ENCODE measurements at regions of chr3 and their contacts with region 1.

Region 1: GRCh38 chr3:4712143-4712542 is 219.0 kb downstream of the ITPR1 start:
- DNase-seq: no peak
- ATAC-seq: no peak
- H3K4me3 Mint-ChIP-seq: no peak overlapping the region
- H3K27ac Mint-ChIP-seq: no peak overlapping the region
- H3K4me1 Mint-ChIP-seq: peaks cover 31% of the 10 kb centered on the region
- H3K27me3 Mint-ChIP-seq: no peaks in the 10 kb centered on the region

Region 2: DNA sequence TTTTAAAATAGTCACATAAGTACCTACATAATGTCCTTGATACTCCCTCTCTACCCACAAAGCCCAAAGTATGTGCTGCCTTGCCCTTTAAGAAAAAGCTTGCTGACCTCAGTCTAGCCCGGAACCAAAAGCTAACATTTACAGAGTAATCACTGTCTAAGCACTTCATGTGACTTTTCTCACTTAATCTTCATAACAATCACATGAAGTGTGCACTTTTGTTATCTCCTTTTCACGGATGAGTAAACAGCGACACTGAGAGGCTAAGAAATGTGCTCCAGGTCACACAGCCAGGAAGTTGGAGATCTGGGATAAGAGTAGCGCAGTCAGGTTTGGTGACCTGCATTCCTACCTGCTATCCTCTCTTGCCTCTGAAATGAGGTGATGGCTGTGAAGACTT is 25.0 kb before region 1 on chr3:
- CTCF ChIA-PET with region 1: interaction called, 13 read pairs
- POLR2A ChIA-PET with region 1: no interaction called
- DNase-seq: no peak
- ATAC-seq: no peak
- H3K4me3 Mint-ChIP-seq: no peak overlapping the region
- H3K27ac Mint-ChIP-seq: no peak overlapping the region
- H3K4me1 Mint-ChIP-seq: peaks cover 18% of the 10 kb centered on the region
- H3K27me3 Mint-ChIP-seq: no peaks in the 10 kb centered on the region

Region 3: GRCh38 chr3:4834403-4834866 is 122.3 kb after region 1 on chr3:
- CTCF ChIA-PET with region 1: interaction called, 14 read pairs
- POLR2A ChIA-PET with region 1: interaction called, 4 read pairs
- DNase-seq: peak; percentile 89
- ATAC-seq: peak; percentile 59
- H3K4me3 Mint-ChIP-seq: peak overlapping the region; percentile 65
- H3K27ac Mint-ChIP-seq: peak overlapping the region; percentile 92
- H3K4me1 Mint-ChIP-seq: peaks cover 91% of the 10 kb centered on the region
- H3K27me3 Mint-ChIP-seq: no peaks in the 10 kb centered on the region

Region 4: DNA sequence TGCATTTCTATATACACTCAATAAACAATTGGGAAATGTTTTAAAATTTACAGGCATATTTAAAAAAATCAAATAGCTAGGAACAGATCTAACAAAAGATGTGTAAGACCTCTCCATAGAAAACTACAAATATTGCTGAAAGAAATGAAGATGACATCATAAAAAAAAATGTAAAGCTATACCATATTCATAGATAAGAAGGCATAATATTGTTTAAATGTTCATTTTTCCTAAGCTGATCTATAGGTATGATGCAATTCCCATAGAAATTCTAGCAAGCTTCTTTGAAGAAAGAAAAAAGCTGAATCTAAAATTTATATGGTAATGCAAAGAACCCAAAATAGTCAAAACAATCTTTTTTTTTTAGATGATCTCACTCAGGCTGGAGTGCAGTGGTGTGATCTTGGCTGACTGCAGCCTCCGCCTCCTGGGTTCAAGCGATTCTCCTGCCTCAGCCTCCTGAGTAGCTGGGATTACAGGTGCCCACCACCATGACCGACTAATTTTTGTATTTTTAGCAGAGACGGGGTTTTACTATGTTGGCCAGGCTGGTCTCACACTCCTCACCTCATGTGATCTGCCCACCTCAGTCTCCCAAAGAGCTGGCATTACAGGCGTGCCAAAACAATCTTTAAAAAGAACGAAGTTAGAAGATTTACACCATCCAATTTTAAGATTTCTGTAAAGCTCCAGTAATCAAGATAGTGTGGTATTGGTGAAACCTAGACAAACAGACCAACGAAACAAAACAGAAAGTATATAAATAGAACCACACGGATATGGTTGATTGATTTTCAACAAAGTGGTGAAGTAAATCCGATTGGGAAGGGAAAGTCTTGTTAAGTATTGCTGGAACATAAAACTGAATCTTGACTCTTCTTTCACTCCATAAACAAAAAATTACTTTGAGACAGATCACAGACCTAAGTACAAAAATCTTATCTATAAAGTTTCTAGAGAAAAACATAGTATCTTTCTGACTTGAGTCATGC is 260.8 kb after region 1 on chr3:
- CTCF ChIA-PET with region 1: interaction called, 258 read pairs
- POLR2A ChIA-PET with region 1: interaction called, 56 read pairs
- DNase-seq: no peak
- ATAC-seq: no peak
- H3K4me3 Mint-ChIP-seq: peak overlapping the region; percentile 22
- H3K27ac Mint-ChIP-seq: peak overlapping the region; percentile 10
- H3K4me1 Mint-ChIP-seq: peaks cover 34% of the 10 kb centered on the region
- H3K27me3 Mint-ChIP-seq: no peaks in the 10 kb centered on the region

Region 5: DNA sequence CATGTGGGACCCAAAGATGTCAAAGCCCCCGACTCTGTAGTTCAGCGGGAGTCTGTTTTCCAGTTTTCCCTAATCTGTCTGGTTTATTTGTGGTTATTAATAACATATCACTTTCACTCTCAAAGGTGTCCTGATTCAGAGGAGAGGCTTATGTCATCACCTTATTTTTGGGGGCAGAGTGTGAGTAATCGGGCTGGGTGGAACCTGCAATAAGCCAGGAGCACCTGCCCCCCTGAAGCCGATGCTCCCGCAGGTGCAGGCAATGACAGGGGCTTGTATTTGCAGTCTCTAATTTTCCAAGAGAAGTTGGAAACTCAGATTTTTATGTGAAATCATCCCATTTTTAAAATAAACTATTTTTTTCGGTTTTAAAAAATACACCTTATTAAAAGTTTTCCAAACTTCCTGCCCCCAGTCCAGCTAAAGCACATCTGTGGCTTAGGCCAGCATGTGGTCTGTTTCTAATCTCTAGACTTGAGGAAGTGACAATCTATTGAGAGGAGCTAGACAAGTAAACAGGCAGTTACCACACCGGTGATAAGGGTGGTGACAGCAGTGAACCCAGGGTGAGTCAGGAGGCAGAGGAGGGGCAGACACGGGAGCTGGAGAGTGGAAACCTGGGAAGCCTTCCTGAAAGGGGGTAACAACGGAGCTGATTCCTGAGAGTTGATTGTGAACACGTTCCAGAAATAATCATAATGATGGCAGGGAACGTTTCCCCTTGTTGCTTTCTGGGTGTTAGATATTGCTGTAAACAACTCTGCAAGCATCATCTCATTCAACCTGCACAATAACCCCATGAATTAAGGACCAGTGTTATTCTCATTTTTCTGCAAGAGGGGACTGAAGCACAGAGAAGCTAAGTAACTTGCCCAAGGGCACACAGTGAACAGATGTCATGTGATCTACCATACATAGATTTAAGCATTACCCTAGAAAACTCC is 304.3 kb after region 1 on chr3:
- CTCF ChIA-PET with region 1: interaction called, 31 read pairs
- POLR2A ChIA-PET with region 1: no interaction called
- DNase-seq: peak; percentile 71
- ATAC-seq: peak; percentile 62
- H3K4me3 Mint-ChIP-seq: peak overlapping the region; percentile 35
- H3K27ac Mint-ChIP-seq: peak overlapping the region; percentile 86
- H3K4me1 Mint-ChIP-seq: peaks cover 96% of the 10 kb centered on the region
- H3K27me3 Mint-ChIP-seq: no peaks in the 10 kb centered on the region

Region 6: DNA sequence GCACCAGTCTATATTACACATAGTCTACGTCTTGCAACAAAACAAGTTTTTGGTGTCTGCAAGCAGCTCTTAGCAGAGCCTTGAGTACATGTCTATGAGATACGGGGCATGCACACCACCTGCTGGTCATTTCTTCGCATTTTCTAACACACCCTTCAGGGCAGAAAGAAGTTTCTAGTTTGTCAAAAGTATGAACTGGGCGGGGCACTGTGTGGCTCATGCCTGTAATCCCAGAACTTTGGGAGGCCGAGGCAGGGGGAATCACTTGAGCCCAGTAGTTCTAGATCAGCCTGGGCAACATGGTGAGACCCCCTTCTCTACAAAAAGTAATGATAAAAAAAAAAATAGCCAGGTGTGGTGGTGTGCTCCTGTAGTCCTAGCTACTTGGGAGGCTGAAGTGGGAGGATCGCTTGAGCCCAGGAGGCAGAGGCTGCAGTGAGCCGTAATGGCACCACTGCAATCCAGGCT is 345.7 kb after region 1 on chr3:
- CTCF ChIA-PET with region 1: interaction called, 213 read pairs
- POLR2A ChIA-PET with region 1: interaction called, 3 read pairs
- DNase-seq: peak; percentile 90
- ATAC-seq: peak; percentile 95
- H3K4me3 Mint-ChIP-seq: no peak overlapping the region
- H3K27ac Mint-ChIP-seq: no peak overlapping the region
- H3K4me1 Mint-ChIP-seq: peaks cover 59% of the 10 kb centered on the region
- H3K27me3 Mint-ChIP-seq: peaks cover 7% of the 10 kb centered on the region

Region 7: GRCh38 chr3:5275529-5275928 is 563.4 kb after region 1 on chr3:
- CTCF ChIA-PET with region 1: no interaction called
- POLR2A ChIA-PET with region 1: no interaction called
- DNase-seq: no peak
- ATAC-seq: no peak
- H3K4me3 Mint-ChIP-seq: no peak overlapping the region
- H3K27ac Mint-ChIP-seq: no peak overlapping the region
- H3K4me1 Mint-ChIP-seq: no peaks in the 10 kb centered on the region
- H3K27me3 Mint-ChIP-seq: peaks cover 2% of the 10 kb centered on the region

Measured in activated CD8-positive, alpha-beta T cell treated with anti-CD3 and anti-CD28 coated beads, Interleukin-2, amount 10 ng/mL, durations not matched to agents 7 days and 5 days (primary cell).